ENCODE measurements at regions of chr17 and their contacts with region 1.

Region 1: DNA sequence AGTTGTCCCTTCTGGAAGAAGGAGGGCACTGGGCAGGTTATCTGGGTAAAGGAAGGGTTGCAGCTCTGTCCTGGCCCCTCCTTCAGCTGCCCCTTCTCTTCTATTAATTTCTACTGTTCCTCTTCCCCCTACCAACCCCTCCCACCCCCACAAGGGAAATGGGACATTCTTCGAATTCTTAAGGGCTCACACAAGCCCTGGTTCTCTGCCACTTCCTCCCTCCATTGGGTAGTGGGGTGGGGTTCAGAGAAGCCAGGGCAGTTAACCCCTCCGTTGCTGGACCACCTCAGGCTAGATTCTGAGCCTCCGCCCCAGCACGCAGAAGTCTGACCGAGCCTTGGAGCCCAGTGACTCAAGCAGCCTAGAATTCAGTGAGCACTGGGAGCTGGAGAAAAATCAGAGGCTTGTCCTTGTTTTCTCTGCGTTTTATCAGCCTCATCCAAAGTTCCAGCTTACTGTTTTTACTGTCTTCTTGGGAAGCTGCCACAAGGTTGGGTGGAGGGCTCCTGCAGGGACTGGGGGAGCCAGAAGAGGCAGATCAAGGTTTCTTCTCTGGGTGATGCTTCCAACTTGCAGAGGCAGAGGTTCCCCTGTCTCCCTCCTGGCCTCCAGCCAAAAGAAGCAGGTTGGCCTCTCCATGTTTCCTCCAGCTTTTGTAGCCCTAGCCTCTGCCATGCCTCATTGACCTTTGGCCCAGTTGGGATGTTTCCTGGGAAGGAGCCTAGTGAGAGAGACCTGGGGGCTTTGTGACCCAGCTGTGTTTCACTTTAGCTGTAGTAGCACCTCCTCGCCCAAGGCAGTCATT is 10.2 kb downstream of the LASP1 start:
- DNase-seq: peak; percentile 93
- H3K4me3 Mint-ChIP-seq: peak overlapping the region; percentile 63
- H3K27ac Mint-ChIP-seq: peak overlapping the region; percentile 82
- H3K4me1 Mint-ChIP-seq: peaks cover 93% of the 10 kb centered on the region
- H3K27me3 Mint-ChIP-seq: no peaks in the 10 kb centered on the region
- CTCF ChIP-seq: no peak

Region 2: DNA sequence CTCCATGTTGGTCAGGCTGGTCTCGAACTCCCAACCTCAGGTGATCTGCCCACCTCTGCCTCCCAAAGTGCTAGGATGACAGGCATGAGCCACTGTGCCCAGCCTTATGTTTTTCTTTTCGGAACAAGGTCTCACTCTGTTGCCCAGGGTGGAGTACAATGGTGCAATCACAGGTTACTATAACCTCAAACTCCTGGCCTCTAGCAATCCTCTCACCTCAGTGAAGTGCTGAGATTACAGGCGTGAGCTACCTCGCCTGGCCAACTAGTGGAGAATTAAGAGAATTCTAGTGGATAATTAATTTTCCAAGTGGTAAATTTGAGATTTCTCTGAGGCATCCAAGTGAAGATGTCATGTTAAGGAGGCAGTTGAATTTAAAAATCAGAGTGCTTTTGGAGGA is 90.0 kb after region 1 on chr17:
- CTCF ChIA-PET with region 1: no interaction called
- intact Hi-C with region 1: no loop called
- DNase-seq: no peak
- H3K4me3 Mint-ChIP-seq: no peak overlapping the region
- H3K27ac Mint-ChIP-seq: no peak overlapping the region
- H3K4me1 Mint-ChIP-seq: no peaks in the 10 kb centered on the region
- H3K27me3 Mint-ChIP-seq: peaks cover 36% of the 10 kb centered on the region
- CTCF ChIP-seq: no peak

Region 3: DNA sequence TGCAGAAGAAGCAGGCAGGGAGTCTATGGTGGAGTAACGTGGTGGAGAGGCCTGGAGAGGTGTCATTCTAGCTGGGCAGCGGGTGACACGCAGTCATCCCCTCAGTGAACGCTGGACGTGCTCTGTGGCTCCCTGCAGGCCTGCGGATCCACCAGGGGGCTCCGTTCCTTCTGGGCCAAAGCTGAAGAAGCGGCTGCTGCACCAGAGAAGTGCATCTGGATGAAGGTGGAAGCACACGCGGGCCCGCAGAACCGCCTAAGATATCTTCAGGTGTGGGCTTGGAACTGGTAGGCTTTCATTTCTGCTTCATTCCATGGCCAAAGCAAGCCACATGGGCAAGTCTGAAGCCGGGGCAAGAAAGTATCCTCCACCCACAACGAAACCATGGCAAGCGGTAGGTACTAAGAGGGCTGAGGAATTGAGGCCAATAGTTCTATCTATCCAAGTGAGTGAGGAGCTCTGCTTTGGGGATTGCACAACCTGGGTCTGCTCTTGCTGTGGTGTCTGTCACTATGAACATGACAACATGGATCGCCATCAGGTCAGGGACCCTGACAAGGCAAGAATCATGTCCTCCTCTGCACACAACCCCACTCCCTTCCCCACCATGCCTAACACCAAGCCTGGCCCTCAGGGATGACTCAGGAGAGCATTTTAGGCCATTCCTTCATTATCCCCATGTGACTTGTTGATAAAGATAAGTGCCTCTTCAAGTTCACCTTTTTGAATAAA is 166.0 kb after region 1 on chr17:
- CTCF ChIA-PET with region 1: interaction called, 12 read pairs
- intact Hi-C with region 1: no loop called
- DNase-seq: no peak
- H3K4me3 Mint-ChIP-seq: no peak overlapping the region
- H3K27ac Mint-ChIP-seq: no peak overlapping the region
- H3K4me1 Mint-ChIP-seq: no peaks in the 10 kb centered on the region
- H3K27me3 Mint-ChIP-seq: peaks cover 63% of the 10 kb centered on the region
- CTCF ChIP-seq: peak; percentile 37

Measured in Calu3 (cell line).